Naive thymus-derived CD8-positive, alpha-beta T cell (primary cell): ENCODE measurements at regions of chr2 and their contacts with region 1.

Region 1: DNA sequence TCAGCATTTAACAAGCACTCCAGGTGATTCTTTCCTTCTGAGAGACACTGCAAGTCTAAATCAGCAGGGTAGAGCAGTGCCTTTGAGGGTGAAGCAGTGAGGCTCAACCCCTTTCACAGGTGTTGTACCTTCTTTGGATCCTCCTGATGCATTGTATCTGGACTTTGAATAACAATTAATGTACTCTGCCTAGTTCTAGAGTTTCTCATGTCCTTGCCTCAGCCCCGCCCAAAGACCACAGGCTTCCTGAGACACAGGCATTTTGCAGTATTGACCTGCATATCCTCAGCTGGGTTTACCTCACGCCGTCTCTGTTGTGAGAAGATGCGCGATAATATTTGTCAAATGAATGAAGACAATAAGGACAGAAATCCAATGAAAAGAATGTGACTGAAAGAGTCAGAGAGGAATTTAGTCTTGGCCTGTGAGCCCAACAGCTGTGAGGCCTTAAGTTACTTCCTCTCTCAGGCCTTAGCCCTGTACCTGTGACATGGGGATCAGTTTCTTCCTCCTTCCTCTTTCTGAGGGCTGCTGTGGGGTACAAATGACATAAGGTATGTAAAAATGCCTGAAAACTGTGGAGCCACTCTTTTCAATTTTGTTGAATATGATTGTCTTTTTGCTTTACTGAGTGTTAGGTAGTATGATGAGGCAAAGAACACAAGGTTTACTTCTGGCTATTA is 43.7 kb downstream of the WIPF1 start:
- DNase-seq: peak in 4 of 10 donors; percentile 18 to 25 (median 20)
- ATAC-seq: peak; percentile 43 to 47
- H3K4me3 Mint-ChIP-seq: peak overlapping the region; percentile 1 to 79 (median 61)
- H3K27ac Mint-ChIP-seq: peak overlapping the region; percentile 51 to 94 (median 83)
- H3K4me1 Mint-ChIP-seq: peaks cover 11 to 60% (median 42%) of the 10 kb centered on the region in 4 donors
- H3K27me3 Mint-ChIP-seq: no peaks in the 10 kb centered on the region

Region 2: GRCh38 chr2:174487108-174487819 is 66.7 kb before region 1 on chr2:
- POLR2A ChIA-PET with region 1: interaction called, 22 read pairs
- DNase-seq: peak; percentile 60 to 98 (median 86)
- ATAC-seq: peak; percentile 67 to 71
- H3K4me3 Mint-ChIP-seq: peak overlapping the region; percentile 90 to 100 (median 98)
- H3K27ac Mint-ChIP-seq: peak overlapping the region; percentile 87 to 98 (median 94)
- H3K4me1 Mint-ChIP-seq: peaks cover 26 to 79% (median 72%) of the 10 kb centered on the region in 4 donors
- H3K27me3 Mint-ChIP-seq: no peaks in the 10 kb centered on the region

Region 3: DNA sequence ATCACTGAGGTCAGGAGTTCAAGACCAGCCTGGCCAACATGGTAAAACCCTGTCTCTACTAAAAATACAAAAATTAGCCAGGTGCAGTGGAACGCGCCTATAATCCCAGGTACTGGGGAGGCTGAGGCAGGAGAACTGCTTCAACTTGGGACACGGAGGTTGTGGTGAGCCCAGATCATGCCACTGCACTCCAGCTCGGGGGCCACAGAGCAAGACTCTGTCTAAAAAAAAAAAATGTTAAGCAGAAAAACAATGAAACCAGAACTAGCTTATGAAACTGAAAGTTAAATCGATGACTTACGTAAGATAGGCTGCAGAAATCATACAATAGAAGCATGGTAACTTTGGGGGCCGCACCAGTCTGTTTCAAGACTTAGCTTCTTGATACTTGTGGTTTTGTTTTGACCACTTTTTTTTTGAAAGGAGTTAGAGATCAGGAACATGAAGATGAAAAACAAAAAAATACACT is 61.0 kb before region 1 on chr2:
- POLR2A ChIA-PET with region 1: interaction called, 22 read pairs
- DNase-seq: peak; percentile 28 to 91 (median 77)
- ATAC-seq: peak; percentile 87 to 91
- H3K4me3 Mint-ChIP-seq: peak overlapping the region; percentile 81 to 94 (median 89)
- H3K27ac Mint-ChIP-seq: peak overlapping the region; percentile 94 to 100 (median 98)
- H3K4me1 Mint-ChIP-seq: peaks cover 28 to 81% (median 79%) of the 10 kb centered on the region in 4 donors
- H3K27me3 Mint-ChIP-seq: no peaks in the 10 kb centered on the region